AG04449 (cell line): ENCODE measurements at regions of chr5 and their contacts with region 1.

Region 1: DNA sequence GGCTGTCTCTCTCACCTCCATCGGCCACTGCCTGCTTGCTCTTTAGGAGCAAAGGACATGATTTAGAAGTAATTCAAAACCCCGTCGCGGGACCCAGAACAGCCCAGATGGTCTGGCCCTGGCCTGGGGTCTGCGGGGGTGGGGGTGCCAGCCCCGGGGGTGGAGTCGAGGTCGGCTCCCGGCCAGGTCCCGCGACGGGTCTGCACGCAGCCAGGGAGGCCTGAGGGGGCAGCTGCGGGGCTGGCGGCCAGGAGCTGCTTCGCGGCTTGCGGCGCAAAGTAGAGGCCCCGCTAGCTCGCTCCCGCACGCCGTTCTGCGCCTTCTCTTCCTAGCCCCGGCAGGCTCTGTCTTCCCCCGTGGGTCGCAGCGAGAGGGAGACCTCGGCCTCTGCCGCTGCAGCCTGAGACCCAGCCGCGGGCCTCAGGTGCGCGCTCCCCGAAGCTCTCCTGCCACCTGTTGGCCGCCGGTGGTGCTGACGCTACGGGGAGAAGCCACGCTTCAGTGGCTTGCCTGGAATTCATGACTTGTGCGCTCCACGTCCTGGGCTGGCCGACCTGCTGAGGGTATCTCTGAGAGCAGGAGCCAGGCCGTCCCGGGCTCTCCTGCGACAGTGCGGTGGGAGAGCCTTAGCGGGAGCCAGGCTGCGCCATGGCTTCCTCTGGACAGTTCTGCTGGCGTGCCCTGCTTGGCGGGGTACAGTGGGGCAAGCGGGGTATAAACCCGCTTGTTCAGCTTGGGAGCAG is 157.2 kb upstream of the PITX1 start:
- DNase-seq: no peak
- H3K4me3 ChIP-seq: peak overlapping the region; percentile 49
- CTCF ChIP-seq: peak; percentile 100

Region 2: DNA sequence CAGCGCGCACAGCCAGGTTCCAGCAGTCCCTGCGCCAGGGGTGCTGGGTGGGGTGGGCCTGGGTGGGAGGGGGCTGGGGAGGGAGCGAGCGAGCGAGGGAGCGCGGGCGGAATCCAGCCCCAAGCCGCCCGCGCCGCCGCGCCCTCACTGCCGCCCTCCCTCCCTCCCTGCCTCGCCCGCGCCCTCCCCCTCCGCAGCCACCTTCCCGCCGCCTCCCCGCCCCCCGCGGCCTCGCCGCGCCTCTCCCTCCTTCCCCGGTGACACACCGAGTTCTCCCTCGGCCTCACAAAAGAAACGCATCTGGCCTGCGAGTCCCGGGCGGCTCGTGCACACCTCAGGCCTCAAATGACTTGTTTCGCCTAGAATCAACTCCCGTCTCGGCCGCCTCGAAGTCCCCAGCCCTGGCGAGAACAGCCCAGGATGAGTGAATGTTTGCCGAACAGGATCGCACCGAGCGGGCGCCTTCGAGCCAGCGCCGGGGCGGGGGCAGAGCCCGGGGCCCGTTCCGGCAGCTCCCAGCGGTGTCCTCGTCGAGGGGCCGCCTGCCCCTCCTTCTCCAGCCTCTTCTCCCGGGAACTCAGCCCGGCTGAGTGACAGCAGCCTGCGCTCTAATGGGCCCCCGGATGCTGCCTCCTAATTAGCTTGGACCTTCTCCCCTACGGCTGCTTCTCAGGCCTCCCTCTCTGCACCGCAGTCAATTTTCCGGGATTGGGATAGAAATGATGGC is 156.9 kb before region 1 on chr5:
- CTCF ChIA-PET with region 1: interaction called, 10 read pairs
- POLR2A ChIA-PET with region 1: no interaction called
- DNase-seq: no peak
- H3K4me3 ChIP-seq: peak overlapping the region; percentile 72
- CTCF ChIP-seq: no peak

Region 3: DNA sequence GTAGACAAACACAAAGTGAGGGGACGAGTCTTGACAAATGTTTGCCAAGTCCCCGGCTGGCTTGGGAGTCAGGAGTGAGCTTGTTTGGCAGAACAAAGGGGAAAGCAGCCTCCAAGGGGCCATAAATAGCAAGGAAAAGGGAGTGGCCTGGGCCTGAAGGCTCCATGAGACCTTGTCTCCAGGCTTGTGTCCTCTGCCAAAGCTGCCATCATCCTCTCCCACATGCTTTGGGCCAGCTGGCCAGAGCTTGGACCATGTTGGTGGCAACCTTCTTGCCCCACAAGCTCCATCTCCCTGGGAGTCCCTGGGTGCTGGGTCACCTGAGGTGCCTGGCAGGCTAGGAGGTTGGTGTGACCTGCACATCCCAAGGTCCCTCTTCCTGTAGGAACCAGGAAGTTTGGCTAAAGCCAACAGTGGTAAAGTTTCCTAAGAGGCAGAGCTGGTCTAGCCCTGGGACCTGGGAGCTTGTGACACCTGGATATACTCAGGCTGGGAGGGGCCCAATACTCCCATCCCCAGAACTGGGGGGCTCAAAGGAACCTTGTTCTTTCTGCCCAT is 143.8 kb before region 1 on chr5:
- CTCF ChIA-PET with region 1: no interaction called
- POLR2A ChIA-PET with region 1: no interaction called
- DNase-seq: no peak
- H3K4me3 ChIP-seq: no peak overlapping the region
- CTCF ChIP-seq: no peak

Region 4: GRCh38 chr5:135085127-135085935 is 105.9 kb before region 1 on chr5:
- CTCF ChIA-PET with region 1: no interaction called
- POLR2A ChIA-PET with region 1: no interaction called
- DNase-seq: no peak
- H3K4me3 ChIP-seq: no peak overlapping the region
- CTCF ChIP-seq: no peak

Region 5: GRCh38 chr5:135179308-135179980 is 11.8 kb before region 1 on chr5:
- CTCF ChIA-PET with region 1: interaction called, 22 read pairs
- POLR2A ChIA-PET with region 1: no interaction called
- DNase-seq: no peak
- H3K4me3 ChIP-seq: no peak overlapping the region
- CTCF ChIP-seq: no peak

Region 6: GRCh38 chr5:135203593-135204036 is 12.4 kb after region 1 on chr5:
- CTCF ChIA-PET with region 1: interaction called, 38 read pairs
- POLR2A ChIA-PET with region 1: no interaction called
- DNase-seq: no peak
- H3K4me3 ChIP-seq: no peak overlapping the region
- CTCF ChIP-seq: no peak

Region 7: GRCh38 chr5:135208903-135209721 is 17.9 kb after region 1 on chr5:
- CTCF ChIA-PET with region 1: interaction called, 38 read pairs
- POLR2A ChIA-PET with region 1: no interaction called
- DNase-seq: peak; percentile 91
- H3K4me3 ChIP-seq: no peak overlapping the region
- CTCF ChIP-seq: peak; percentile 44

Region 8: GRCh38 chr5:135326296-135327249 is 135.3 kb after region 1 on chr5:
- CTCF ChIA-PET with region 1: interaction called, 40 read pairs
- POLR2A ChIA-PET with region 1: no interaction called
- DNase-seq: no peak
- H3K4me3 ChIP-seq: no peak overlapping the region
- CTCF ChIP-seq: no peak

Region 9: GRCh38 chr5:135332519-135333150 is 141.4 kb after region 1 on chr5:
- CTCF ChIA-PET with region 1: interaction called, 40 read pairs
- POLR2A ChIA-PET with region 1: no interaction called
- DNase-seq: no peak
- H3K4me3 ChIP-seq: no peak overlapping the region
- CTCF ChIP-seq: peak; percentile 32